H1 (cell line): ENCODE measurements at regions of chr7 and their contacts with region 1.

Region 1: GRCh38 chr7:15389073-15389472 is 172.7 kb downstream of the AGMO start:
- DNase-seq: no peak
- H3K4me3 ChIP-seq: no peak overlapping the region
- H3K27ac ChIP-seq: no peak overlapping the region
- H3K4me1 ChIP-seq: no peaks in the 10 kb centered on the region
- H3K27me3 ChIP-seq: no peaks in the 10 kb centered on the region
- CTCF ChIP-seq: no peak
- EP300 ChIP-seq: no peak
- POLR2A ChIP-seq: no peak
- RAD21 ChIP-seq: no peak

Region 2: GRCh38 chr7:15376600-15376999 is 12.5 kb before region 1 on chr7:
- CTCF ChIA-PET with region 1: interaction called, 13 read pairs
- POLR2A ChIA-PET with region 1: no interaction called
- DNase-seq: no peak
- H3K4me3 ChIP-seq: no peak overlapping the region
- H3K27ac ChIP-seq: no peak overlapping the region
- H3K4me1 ChIP-seq: no peaks in the 10 kb centered on the region
- H3K27me3 ChIP-seq: no peaks in the 10 kb centered on the region
- CTCF ChIP-seq: no peak
- EP300 ChIP-seq: no peak
- POLR2A ChIP-seq: no peak
- RAD21 ChIP-seq: no peak

Region 3: DNA sequence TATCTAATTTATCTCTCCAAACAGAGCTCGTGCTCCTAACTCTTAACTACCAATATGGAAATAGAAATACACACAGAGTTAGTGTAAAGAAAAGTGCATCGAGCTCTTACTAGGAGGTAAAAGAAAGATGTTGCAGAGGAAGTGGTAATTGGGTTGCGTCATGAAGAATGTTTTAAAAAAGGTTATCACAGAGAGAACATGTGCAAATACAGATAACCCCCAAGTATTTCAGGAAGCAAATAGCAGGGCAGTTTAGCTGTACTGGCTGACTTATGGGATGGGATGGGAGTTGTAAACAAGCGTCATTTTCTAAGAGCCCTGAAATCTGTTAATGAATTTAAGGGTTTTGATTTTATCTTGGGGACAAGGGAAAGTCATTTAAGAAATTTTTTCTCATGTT is 18.8 kb after region 1 on chr7:
- CTCF ChIA-PET with region 1: no interaction called
- POLR2A ChIA-PET with region 1: no interaction called
- DNase-seq: no peak
- H3K4me3 ChIP-seq: no peak overlapping the region
- H3K27ac ChIP-seq: no peak overlapping the region
- H3K4me1 ChIP-seq: no peaks in the 10 kb centered on the region
- H3K27me3 ChIP-seq: no peaks in the 10 kb centered on the region
- CTCF ChIP-seq: no peak
- EP300 ChIP-seq: no peak
- POLR2A ChIP-seq: no peak
- RAD21 ChIP-seq: no peak

Region 4: DNA sequence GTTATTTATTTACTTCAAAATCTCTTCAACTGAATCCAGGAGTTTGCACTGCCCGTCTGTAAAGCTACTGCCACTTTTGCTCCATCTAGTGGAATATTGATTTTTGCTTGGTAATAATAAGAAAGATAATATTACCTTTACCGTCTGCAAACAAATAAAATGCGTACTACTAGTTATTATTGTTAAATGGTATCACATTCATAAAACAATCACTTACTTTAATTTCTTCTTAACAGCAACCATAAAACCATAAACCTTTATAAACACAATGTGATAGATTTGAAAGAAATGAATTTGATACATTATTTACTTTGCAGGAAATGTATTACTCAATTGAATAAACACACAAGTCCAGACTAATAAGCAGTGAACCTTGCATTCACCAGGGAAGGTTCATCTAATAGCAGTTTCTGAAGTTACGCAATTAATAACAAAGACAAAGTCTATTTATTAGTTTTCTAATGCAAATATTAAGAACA is 166.3 kb after region 1 on chr7:
- CTCF ChIA-PET with region 1: no interaction called
- POLR2A ChIA-PET with region 1: no interaction called
- DNase-seq: no peak
- H3K4me3 ChIP-seq: no peak overlapping the region
- H3K27ac ChIP-seq: no peak overlapping the region
- H3K4me1 ChIP-seq: no peaks in the 10 kb centered on the region
- H3K27me3 ChIP-seq: no peaks in the 10 kb centered on the region
- CTCF ChIP-seq: no peak
- EP300 ChIP-seq: no peak
- POLR2A ChIP-seq: no peak
- RAD21 ChIP-seq: peak in 1 of 2 experiments; percentile 17; a peak in 2 of 4 replicates